B cell (primary cell): ENCODE measurements at regions of chr3 and their contacts with region 1.

Region 1: DNA sequence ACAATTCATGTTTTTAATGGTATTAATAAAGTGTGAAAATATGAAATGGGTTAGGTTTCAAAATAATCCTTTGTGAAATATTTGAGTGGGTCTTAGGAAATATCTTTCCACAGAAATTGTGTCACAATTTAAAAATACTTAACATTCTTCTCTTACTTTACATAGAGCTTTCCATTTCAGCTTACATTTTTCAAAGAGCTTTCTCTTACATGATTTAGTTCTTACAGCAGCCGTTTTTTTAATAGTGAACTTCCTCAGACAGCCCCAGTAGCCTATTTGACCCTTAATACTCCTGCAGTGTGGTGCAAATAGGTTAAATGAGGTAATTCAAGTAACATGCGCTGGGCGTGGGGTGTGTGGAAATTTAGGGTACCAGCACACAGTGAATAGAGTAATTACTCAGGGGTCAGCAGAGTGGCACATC is 21.8 kb downstream of the P2RY12 start:
- DNase-seq: no peak
- ATAC-seq: no peak
- H3K4me3 ChIP-seq: no peak overlapping the region
- H3K4me3 Mint-ChIP-seq: no peak overlapping the region
- H3K27ac ChIP-seq: no peak overlapping the region
- H3K27ac Mint-ChIP-seq: no peak overlapping the region
- H3K4me1 ChIP-seq: no peaks in the 10 kb centered on the region
- H3K4me1 Mint-ChIP-seq: peaks cover 4% of the 10 kb centered on the region
- H3K27me3 ChIP-seq: no peaks in the 10 kb centered on the region
- H3K27me3 Mint-ChIP-seq: no peaks in the 10 kb centered on the region
- CTCF ChIP-seq: no peak

Region 2: GRCh38 chr3:151075869-151076562 is 286.7 kb before region 1 on chr3:
- CTCF ChIA-PET with region 1: no interaction called
- POLR2A ChIA-PET with region 1: no interaction called
- intact Hi-C with region 1: no loop called
- DNase-seq: no peak
- ATAC-seq: no peak
- H3K4me3 ChIP-seq: no peak overlapping the region
- H3K4me3 Mint-ChIP-seq: no peak overlapping the region
- H3K27ac ChIP-seq: no peak overlapping the region
- H3K27ac Mint-ChIP-seq: no peak overlapping the region
- H3K4me1 ChIP-seq: no peaks in the 10 kb centered on the region
- H3K4me1 Mint-ChIP-seq: no peaks in the 10 kb centered on the region
- H3K27me3 ChIP-seq: peaks cover 0 to 6% (median 4%) of the 10 kb centered on the region in 4 experiments
- H3K27me3 Mint-ChIP-seq: peaks cover 4% of the 10 kb centered on the region
- CTCF ChIP-seq: no peak

Region 3: GRCh38 chr3:151379083-151379734 is 16.4 kb after region 1 on chr3:
- CTCF ChIA-PET with region 1: interaction called, 4 read pairs
- POLR2A ChIA-PET with region 1: interaction called, 3 read pairs
- intact Hi-C with region 1: loop called (anchors 2 kb)
- DNase-seq: peak; percentile 52
- ATAC-seq: peak; percentile 68
- H3K4me3 ChIP-seq: no peak overlapping the region
- H3K4me3 Mint-ChIP-seq: no peak overlapping the region
- H3K27ac ChIP-seq: no peak overlapping the region
- H3K27ac Mint-ChIP-seq: peak overlapping the region; percentile 48
- H3K4me1 ChIP-seq: peaks cover 27% of the 10 kb centered on the region in 2 donors
- H3K4me1 Mint-ChIP-seq: peaks cover 48% of the 10 kb centered on the region
- H3K27me3 ChIP-seq: no peaks in the 10 kb centered on the region
- H3K27me3 Mint-ChIP-seq: no peaks in the 10 kb centered on the region
- CTCF ChIP-seq: peak; percentile 72

Region 4: GRCh38 chr3:152352554-152352953 is 989.8 kb after region 1 on chr3:
- CTCF ChIA-PET with region 1: no interaction called
- POLR2A ChIA-PET with region 1: no interaction called
- intact Hi-C with region 1: no loop called
- DNase-seq: no peak
- ATAC-seq: no peak
- H3K4me3 ChIP-seq: no peak overlapping the region
- H3K4me3 Mint-ChIP-seq: peak overlapping the region; percentile 7
- H3K27ac ChIP-seq: peak overlapping the region in 1 of 2 donors; percentile 45
- H3K27ac Mint-ChIP-seq: peak overlapping the region; percentile 56
- H3K4me1 ChIP-seq: peaks cover 26 to 67% of the 10 kb centered on the region in 2 donors
- H3K4me1 Mint-ChIP-seq: peaks cover 46% of the 10 kb centered on the region
- H3K27me3 ChIP-seq: no peaks in the 10 kb centered on the region
- H3K27me3 Mint-ChIP-seq: no peaks in the 10 kb centered on the region
- CTCF ChIP-seq: no peak